A673 (cell line): ENCODE measurements at regions of chr15 and their contacts with region 1.

Region 1: DNA sequence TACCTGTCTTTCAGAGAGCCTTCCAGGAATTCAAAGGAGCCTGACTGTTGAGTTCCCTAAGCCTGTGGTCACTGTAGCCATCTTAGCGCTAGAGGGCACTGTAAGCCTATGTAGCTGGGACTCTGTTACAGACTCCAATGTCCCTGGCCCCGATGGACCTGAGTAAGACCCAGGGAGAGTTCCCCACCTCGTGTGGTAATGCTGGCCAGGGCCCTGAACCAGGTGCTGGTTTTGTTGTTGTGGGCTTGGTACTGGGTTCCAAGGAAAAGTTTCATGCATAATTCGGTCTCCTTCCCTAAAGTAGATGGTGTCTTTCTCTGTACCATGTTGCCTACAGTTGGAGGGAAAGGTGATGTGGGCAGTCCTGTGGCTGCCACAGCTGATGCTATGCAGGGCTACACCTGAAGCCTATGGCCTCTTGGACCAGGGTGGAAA is 32.4 kb downstream of the CDAN1 start:
- DNase-seq: peak; percentile 73
- H3K4me3 ChIP-seq: no peak overlapping the region
- H3K27ac ChIP-seq: no peak overlapping the region
- H3K4me1 ChIP-seq: no peaks in the 10 kb centered on the region
- H3K27me3 ChIP-seq: no peaks in the 10 kb centered on the region
- CTCF ChIP-seq: peak; percentile 90

Region 2: DNA sequence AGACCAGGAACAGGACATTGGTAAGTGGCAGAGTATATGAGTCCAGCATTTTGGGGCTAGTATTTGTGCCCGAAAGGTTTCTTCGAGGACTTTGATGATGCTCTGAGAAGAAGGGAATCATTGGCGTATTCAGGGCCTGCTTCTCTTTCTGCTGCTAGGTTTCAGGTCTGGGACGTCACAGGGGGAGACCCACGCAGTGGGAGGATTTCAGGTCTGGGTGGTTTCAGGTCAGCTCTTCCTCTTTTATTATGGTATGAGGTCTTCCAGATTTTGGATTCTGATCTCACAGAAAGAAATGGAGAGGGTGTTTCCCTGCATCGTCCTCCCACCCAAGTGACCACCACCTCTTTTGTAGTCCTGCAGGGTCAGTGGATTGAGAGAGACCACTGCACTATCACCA is 30.0 kb before region 1 on chr15:
- CTCF ChIA-PET with region 1: no interaction called
- POLR2A ChIA-PET with region 1: interaction called, 13 read pairs
- intact Hi-C with region 1: no loop called
- DNase-seq: no peak
- H3K4me3 ChIP-seq: no peak overlapping the region
- H3K27ac ChIP-seq: no peak overlapping the region
- H3K4me1 ChIP-seq: peaks cover 4% of the 10 kb centered on the region
- H3K27me3 ChIP-seq: no peaks in the 10 kb centered on the region
- CTCF ChIP-seq: no peak

Region 3: GRCh38 chr15:42749266-42749665 is 44.8 kb after region 1 on chr15:
- CTCF ChIA-PET with region 1: no interaction called
- POLR2A ChIA-PET with region 1: no interaction called
- intact Hi-C with region 1: no loop called
- DNase-seq: no peak
- H3K4me3 ChIP-seq: no peak overlapping the region
- H3K27ac ChIP-seq: no peak overlapping the region
- H3K4me1 ChIP-seq: no peaks in the 10 kb centered on the region
- H3K27me3 ChIP-seq: no peaks in the 10 kb centered on the region
- CTCF ChIP-seq: no peak

Region 4: GRCh38 chr15:43185157-43186017 is 480.9 kb after region 1 on chr15 and contains the start of gene CCNDBP1:
- CTCF ChIA-PET with region 1: no interaction called
- POLR2A ChIA-PET with region 1: no interaction called
- intact Hi-C with region 1: loop called (anchors 5 kb)
- DNase-seq: peak; percentile 82
- H3K4me3 ChIP-seq: peak within 1 kb of the TSS; percentile 65
- H3K27ac ChIP-seq: peak within 1 kb of the TSS; percentile 13
- H3K4me1 ChIP-seq: no peaks in the 10 kb centered on the region
- H3K27me3 ChIP-seq: no peaks in the 10 kb centered on the region
- CTCF ChIP-seq: peak; percentile 65
- total RNA-seq, gene CCNDBP1: 16.7 and 22.1 TPM in 2 replicates

Region 5: DNA sequence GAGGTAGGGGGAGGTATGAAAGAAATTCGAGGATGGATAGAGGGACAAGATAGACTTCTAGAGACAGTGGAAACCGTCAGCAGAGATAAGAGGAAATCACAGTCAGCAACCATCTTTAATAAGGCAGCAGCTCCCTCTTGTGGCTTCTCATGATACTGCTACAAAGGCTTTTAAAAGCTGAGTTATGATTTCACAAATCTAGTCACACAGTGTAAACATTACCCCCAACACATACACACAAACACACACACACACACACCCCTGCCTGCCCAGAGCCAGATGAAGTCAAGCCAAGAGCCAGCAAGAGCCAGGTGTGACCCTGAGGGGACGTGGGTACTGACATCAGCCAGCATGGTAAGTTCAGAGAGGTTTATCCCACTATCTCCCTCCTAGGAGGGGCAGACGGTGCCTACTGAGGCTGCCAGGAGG is 581.1 kb after region 1 on chr15:
- CTCF ChIA-PET with region 1: no interaction called
- POLR2A ChIA-PET with region 1: no interaction called
- intact Hi-C with region 1: loop called (anchors 5 kb)
- DNase-seq: peak; percentile 77
- H3K4me3 ChIP-seq: no peak overlapping the region
- H3K27ac ChIP-seq: no peak overlapping the region
- H3K4me1 ChIP-seq: no peaks in the 10 kb centered on the region
- H3K27me3 ChIP-seq: no peaks in the 10 kb centered on the region
- CTCF ChIP-seq: peak; percentile 86